CD8-positive, alpha-beta memory T cell (primary cell): ENCODE measurements at regions of chr1 and their contacts with region 1.

Region 1: GRCh38 chr1:155063550-155064110 is at the start of gene EFNA4:
- DNase-seq: peak; percentile 73 to 87 (median 80)
- H3K4me3 ChIP-seq: peak within 1 kb of the TSS; percentile 88
- H3K4me3 Mint-ChIP-seq: peak within 1 kb of the TSS; percentile 89 to 98 (median 95)
- H3K27ac ChIP-seq: peak within 1 kb of the TSS; percentile 65
- H3K27ac Mint-ChIP-seq: peak within 1 kb of the TSS; percentile 40 to 92 (median 80)
- H3K4me1 ChIP-seq: peaks cover 34% of the 10 kb centered on the region
- H3K4me1 Mint-ChIP-seq: peaks cover 23 to 39% (median 33%) of the 10 kb centered on the region in 3 donors
- H3K27me3 ChIP-seq: no peaks in the 10 kb centered on the region
- H3K27me3 Mint-ChIP-seq: no peaks in the 10 kb centered on the region
- total RNA-seq, gene EFNA4: 3.4 to 3.7 TPM

Region 2: DNA sequence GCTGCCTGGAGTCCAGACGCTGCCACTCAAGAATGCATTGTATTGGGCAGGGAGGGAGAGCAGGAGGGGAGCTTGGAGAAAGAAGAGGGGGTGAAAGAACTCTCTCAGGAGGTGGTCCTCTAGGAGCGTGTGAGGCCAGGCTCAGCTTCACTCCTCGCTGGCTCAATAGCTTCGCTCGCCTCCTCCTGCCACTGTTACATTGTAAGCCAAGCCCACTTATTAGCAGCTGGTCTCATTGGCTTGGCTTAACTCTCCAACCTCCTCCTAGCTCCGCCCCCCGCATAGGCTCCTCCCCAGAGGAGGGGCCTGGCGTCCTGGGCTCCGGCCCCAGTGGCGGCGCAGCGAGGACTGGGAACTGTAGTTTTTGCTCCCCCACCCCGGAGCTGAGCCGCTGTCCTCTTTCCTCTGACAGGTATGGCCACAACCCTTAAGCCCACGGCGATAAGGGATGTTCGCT is 193.5 kb before region 1 on chr1 and contains the start of gene KCNN3:
- CTCF ChIA-PET with region 1: no interaction called
- POLR2A ChIA-PET with region 1: no interaction called
- DNase-seq: peak; percentile 49 to 81 (median 65)
- H3K4me3 ChIP-seq: no peak within 1 kb of the TSS
- H3K4me3 Mint-ChIP-seq: peak within 1 kb of the TSS in 5 of 7 donors; percentile 20 to 73 (median 55)
- H3K27ac ChIP-seq: no peak within 1 kb of the TSS
- H3K27ac Mint-ChIP-seq: peak within 1 kb of the TSS in 1 of 8 donors; percentile 43
- H3K4me1 ChIP-seq: no peaks in the 10 kb centered on the region
- H3K4me1 Mint-ChIP-seq: peaks cover 13 to 29% (median 19%) of the 10 kb centered on the region in 3 donors
- H3K27me3 ChIP-seq: peaks cover 13% of the 10 kb centered on the region
- H3K27me3 Mint-ChIP-seq: peaks cover 27 to 68% of the 10 kb centered on the region in 2 donors
- total RNA-seq, gene KCNN3: 0.18 to 0.22 TPM

Region 3: GRCh38 chr1:155038602-155039307 is 24.9 kb before region 1 on chr1:
- CTCF ChIA-PET with region 1: interaction called, 172 read pairs
- POLR2A ChIA-PET with region 1: no interaction called
- DNase-seq: no peak
- H3K4me3 ChIP-seq: no peak overlapping the region
- H3K4me3 Mint-ChIP-seq: no peak overlapping the region
- H3K27ac ChIP-seq: no peak overlapping the region
- H3K27ac Mint-ChIP-seq: peak overlapping the region in 3 of 8 donors; percentile 9 to 70 (median 42)
- H3K4me1 ChIP-seq: no peaks in the 10 kb centered on the region
- H3K4me1 Mint-ChIP-seq: no peaks in the 10 kb centered on the region
- H3K27me3 ChIP-seq: no peaks in the 10 kb centered on the region
- H3K27me3 Mint-ChIP-seq: peaks cover 5 to 23% of the 10 kb centered on the region in 2 donors

Region 4: DNA sequence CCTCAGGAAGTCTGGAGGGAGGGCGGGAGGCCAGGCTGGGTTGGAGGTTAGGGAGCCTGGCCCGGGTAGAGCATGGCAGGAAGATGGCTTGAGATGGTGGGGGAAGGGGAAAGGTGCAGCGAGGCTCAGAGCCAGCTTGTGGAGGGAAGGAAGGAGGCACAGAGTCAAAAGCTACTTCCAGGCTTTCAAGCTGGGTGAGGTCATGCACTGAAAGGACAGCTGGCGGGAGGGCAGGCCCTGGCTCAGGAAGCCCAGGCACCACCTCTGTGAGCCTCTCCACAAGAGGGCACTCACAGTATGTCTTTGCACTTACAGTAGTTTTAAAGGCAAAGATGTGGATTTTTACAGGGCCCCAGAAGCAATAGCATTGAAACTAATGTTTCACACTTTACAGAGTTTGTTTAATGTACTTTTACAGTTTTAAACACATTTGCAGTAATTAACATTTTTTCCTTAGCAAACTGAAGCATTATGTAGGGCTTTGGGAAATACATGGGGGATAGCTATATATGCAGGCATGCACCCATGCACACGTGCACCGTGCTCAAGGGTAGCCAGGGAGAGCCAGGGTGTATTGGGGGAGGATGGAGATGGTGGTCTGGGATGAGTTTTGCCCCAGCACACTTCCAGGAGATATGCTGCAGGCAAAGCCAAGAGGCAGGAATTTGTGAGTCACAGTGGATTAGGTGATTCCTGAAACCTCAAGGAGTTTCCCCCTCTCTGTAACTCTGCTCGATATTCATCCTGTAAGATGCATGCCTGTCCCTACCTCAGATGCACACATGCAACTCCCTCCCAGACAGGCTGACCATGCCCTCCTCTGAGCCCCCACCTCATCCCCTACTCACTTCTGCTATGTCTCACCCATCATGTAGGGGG is 18.6 kb before region 1 on chr1:
- CTCF ChIA-PET with region 1: interaction called, 172 read pairs
- POLR2A ChIA-PET with region 1: interaction called, 3 read pairs
- DNase-seq: peak; percentile 34 to 75 (median 57)
- H3K4me3 ChIP-seq: no peak overlapping the region
- H3K4me3 Mint-ChIP-seq: peak overlapping the region in 1 of 7 donors; percentile 49
- H3K27ac ChIP-seq: no peak overlapping the region
- H3K27ac Mint-ChIP-seq: no peak overlapping the region
- H3K4me1 ChIP-seq: peaks cover under 1% of the 10 kb centered on the region
- H3K4me1 Mint-ChIP-seq: peaks cover 5 to 11% (median 6%) of the 10 kb centered on the region in 3 donors
- H3K27me3 ChIP-seq: no peaks in the 10 kb centered on the region
- H3K27me3 Mint-ChIP-seq: peaks cover 3 to 4% of the 10 kb centered on the region in 2 donors

Region 5: DNA sequence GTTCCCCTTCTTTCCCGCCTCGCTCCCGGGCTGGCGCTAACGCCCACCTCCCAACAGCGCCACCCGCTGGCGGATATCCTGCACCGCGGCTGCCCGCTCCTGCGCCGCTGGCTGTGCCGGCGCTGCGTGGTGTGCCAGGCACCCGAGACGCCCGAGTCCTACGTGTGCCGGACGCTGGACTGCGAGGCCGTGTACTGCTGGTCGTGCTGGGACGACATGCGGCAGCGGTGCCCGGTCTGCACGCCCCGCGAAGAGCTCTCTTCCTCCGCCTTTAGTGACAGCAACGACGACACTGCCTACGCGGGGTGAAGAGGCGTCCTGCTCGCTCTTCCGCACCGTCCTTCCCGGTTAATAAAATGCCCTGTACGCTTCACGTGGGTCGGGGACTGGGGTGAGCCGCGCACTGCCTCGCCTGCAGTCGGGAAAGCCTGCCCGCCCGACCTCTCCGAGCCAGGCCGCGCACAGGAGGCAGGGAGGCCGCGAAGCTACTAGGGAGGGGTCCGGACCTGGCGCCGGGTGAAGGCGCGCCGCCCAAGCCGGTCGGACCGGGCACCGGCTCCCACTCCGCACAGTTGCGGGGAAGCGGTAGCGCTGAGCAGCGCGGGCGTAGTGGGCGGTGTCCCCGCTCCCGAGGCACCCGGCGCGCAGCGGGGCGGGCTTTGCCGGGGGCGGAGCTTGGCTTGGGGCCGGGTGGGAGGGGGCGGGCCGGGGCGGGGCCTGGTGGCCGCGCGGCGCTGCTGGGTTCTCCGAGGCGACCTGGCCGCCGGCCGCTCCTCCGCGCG is 12.9 kb before region 1 on chr1 and contains the start of gene ADAM15:
- CTCF ChIA-PET with region 1: interaction called, 172 read pairs
- POLR2A ChIA-PET with region 1: interaction called, 5 read pairs
- DNase-seq: peak; percentile 73 to 82 (median 77)
- H3K4me3 ChIP-seq: peak within 1 kb of the TSS; percentile 67
- H3K4me3 Mint-ChIP-seq: peak within 1 kb of the TSS; percentile 84 to 90 (median 86)
- H3K27ac ChIP-seq: peak within 1 kb of the TSS; percentile 46
- H3K27ac Mint-ChIP-seq: peak within 1 kb of the TSS; percentile 50 to 96 (median 68)
- H3K4me1 ChIP-seq: peaks cover 21% of the 10 kb centered on the region
- H3K4me1 Mint-ChIP-seq: peaks cover 23 to 33% (median 23%) of the 10 kb centered on the region in 3 donors
- H3K27me3 ChIP-seq: no peaks in the 10 kb centered on the region
- H3K27me3 Mint-ChIP-seq: peaks cover 0 to 1% of the 10 kb centered on the region in 2 donors
- total RNA-seq, gene ADAM15: 34.5 to 36.9 TPM

Region 6: GRCh38 chr1:155078469-155079209 is 15.0 kb after region 1 on chr1 and contains the start of gene EFNA3:
- CTCF ChIA-PET with region 1: interaction called, 107 read pairs
- POLR2A ChIA-PET with region 1: interaction called, 3 read pairs
- DNase-seq: peak; percentile 37 to 73 (median 49)
- H3K4me3 ChIP-seq: peak within 1 kb of the TSS; percentile 60
- H3K4me3 Mint-ChIP-seq: peak within 1 kb of the TSS; percentile 75 to 85 (median 82)
- H3K27ac ChIP-seq: peak within 1 kb of the TSS; percentile 9
- H3K27ac Mint-ChIP-seq: peak within 1 kb of the TSS; percentile 2 to 77 (median 34)
- H3K4me1 ChIP-seq: peaks cover 56% of the 10 kb centered on the region
- H3K4me1 Mint-ChIP-seq: peaks cover 28 to 53% (median 33%) of the 10 kb centered on the region in 3 donors
- H3K27me3 ChIP-seq: peaks cover 35% of the 10 kb centered on the region
- H3K27me3 Mint-ChIP-seq: peaks cover 29 to 33% of the 10 kb centered on the region in 2 donors
- total RNA-seq, gene EFNA3: 0.94 to 1.4 TPM

Region 7: DNA sequence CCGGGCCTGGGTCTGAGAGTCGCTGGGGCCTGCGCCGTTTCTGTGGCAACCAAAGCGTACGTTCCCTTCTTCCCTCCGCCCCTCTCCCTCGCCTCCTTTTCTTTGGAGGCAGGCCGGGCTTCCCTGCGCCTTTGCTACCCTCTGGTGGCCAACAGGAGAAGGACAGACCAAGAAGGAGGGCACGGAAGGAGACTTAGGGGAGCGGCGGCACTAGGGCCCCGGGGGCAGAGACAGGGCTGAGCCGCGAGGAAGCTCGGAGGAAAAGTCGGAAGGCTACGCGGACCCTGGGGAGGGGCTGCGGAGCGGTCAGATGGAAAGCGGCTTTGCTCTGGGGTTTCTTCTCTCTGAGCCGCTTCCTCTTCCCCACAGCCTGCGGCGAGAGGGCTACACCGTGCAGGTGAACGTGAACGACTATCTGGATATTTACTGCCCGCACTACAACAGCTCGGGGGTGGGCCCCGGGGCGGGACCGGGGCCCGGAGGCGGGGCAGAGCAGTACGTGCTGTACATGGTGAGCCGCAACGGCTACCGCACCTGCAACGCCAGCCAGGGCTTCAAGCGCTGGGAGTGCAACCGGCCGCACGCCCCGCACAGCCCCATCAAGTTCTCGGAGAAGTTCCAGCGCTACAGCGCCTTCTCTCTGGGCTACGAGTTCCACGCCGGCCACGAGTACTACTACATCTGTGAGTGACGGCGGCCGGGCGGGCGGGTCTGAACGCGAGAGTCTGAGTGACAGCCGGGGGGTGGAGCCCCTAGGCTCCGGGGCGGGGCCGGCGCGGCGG is 21.3 kb after region 1 on chr1:
- CTCF ChIA-PET with region 1: interaction called, 107 read pairs
- POLR2A ChIA-PET with region 1: interaction called, 15 read pairs
- DNase-seq: peak; percentile 86 to 95 (median 90)
- H3K4me3 ChIP-seq: peak overlapping the region; percentile 99
- H3K4me3 Mint-ChIP-seq: peak overlapping the region; percentile 86 to 98 (median 92)
- H3K27ac ChIP-seq: peak overlapping the region; percentile 71
- H3K27ac Mint-ChIP-seq: peak overlapping the region; percentile 80 to 97 (median 94)
- H3K4me1 ChIP-seq: peaks cover 57% of the 10 kb centered on the region
- H3K4me1 Mint-ChIP-seq: peaks cover 33 to 51% (median 36%) of the 10 kb centered on the region in 3 donors
- H3K27me3 ChIP-seq: peaks cover 40% of the 10 kb centered on the region
- H3K27me3 Mint-ChIP-seq: peaks cover 34 to 36% of the 10 kb centered on the region in 2 donors